Activated naive CD4-positive, alpha-beta T cell treated with anti-CD3 and anti-CD28 coated beads for 36 hours (primary cell): ENCODE measurements at regions of chr4 and their contacts with region 1.

Region 1: GRCh38 chr4:145808021-145808650 is 128.2 kb downstream of the C4orf51 start:
- DNase-seq: peak; percentile 74
- H3K4me3 Mint-ChIP-seq: peak overlapping the region; percentile 46
- H3K27ac Mint-ChIP-seq: peak overlapping the region; percentile 91
- H3K4me1 Mint-ChIP-seq: peaks cover 44% of the 10 kb centered on the region
- H3K27me3 Mint-ChIP-seq: no peaks in the 10 kb centered on the region

Region 2: DNA sequence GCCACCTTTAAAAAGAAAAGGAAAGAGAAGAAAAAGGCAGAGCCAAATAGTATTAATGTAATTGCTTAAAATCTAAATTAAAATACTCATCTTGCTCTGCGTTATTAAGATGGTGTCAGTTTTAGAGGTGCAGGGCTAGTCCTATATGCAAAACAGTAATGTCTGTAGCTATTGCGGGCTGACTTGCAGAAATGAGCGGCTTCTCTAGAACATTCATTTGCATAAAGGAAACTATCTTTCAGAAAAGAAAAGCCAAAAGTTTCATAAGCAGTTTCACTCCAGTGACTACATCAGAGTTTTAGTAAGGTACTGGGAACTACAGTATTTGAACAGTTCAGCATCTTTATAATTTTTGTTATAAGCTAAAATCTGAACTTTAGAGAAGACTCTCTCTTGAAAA is 320.5 kb before region 1 on chr4:
- CTCF ChIA-PET with region 1: no interaction called
- intact Hi-C with region 1: loop called (anchors 1 kb)
- DNase-seq: peak; percentile 55
- H3K4me3 Mint-ChIP-seq: no peak overlapping the region
- H3K27ac Mint-ChIP-seq: no peak overlapping the region
- H3K4me1 Mint-ChIP-seq: peaks cover 5% of the 10 kb centered on the region
- H3K27me3 Mint-ChIP-seq: peaks cover 14% of the 10 kb centered on the region

Region 3: GRCh38 chr4:145656156-145656555 is 152.0 kb before region 1 on chr4:
- CTCF ChIA-PET with region 1: no interaction called
- intact Hi-C with region 1: no loop called
- DNase-seq: no peak
- H3K4me3 Mint-ChIP-seq: no peak overlapping the region
- H3K27ac Mint-ChIP-seq: no peak overlapping the region
- H3K4me1 Mint-ChIP-seq: no peaks in the 10 kb centered on the region
- H3K27me3 Mint-ChIP-seq: no peaks in the 10 kb centered on the region

Region 4: DNA sequence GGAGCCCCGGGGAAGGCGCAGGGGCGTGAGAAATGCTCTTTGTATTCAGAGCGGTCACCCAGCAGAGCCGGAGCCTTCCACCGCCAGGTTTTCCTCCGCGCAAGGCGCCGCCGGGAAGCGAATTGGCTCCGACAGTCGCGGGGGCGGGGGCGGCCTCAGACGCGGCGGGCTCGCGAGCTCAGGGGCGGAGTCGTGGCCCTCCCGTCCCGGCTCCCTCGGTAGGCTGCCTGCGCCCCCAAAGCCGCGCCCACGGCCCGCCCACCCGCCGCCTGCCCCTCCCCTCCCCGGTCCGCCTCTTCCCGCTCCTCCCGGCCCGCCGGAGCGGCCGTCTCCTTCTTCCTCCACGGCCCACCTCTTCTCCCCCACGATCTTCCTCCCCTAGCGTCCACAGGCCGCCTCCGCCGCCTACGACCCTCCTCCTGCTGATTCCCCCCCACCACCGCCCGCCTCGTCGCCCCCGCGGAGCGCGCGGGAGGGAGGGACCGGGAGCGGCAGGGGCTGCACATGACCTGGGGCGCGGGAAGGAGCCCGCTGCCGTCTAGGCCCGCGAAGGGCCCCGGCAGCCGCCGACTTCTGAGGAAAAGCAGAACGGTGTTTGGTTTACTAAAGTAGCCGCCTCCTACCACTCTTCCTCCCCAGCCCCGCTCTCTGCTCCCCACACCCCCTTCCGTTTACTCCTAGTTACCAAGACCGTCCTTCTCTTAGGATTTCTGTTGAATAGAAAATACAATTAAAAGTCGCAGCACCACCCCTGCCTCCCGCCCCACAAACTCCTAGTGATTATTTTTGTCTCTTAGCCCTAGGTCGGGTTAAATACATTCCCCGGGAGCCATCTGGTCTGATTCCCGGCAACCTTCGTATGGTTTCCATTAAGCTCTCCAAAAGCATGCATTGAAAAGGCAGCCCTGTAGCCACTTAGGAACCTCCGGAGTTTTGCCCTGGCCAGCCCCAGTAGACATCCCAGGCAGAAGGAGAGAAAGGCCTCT is 74.9 kb before region 1 on chr4:
- CTCF ChIA-PET with region 1: no interaction called
- intact Hi-C with region 1: loop called (anchors 1 kb)
- DNase-seq: peak; percentile 91
- H3K4me3 Mint-ChIP-seq: peak overlapping the region; percentile 75
- H3K27ac Mint-ChIP-seq: peak overlapping the region; percentile 36
- H3K4me1 Mint-ChIP-seq: peaks cover 7% of the 10 kb centered on the region
- H3K27me3 Mint-ChIP-seq: peaks cover 10% of the 10 kb centered on the region

Region 5: DNA sequence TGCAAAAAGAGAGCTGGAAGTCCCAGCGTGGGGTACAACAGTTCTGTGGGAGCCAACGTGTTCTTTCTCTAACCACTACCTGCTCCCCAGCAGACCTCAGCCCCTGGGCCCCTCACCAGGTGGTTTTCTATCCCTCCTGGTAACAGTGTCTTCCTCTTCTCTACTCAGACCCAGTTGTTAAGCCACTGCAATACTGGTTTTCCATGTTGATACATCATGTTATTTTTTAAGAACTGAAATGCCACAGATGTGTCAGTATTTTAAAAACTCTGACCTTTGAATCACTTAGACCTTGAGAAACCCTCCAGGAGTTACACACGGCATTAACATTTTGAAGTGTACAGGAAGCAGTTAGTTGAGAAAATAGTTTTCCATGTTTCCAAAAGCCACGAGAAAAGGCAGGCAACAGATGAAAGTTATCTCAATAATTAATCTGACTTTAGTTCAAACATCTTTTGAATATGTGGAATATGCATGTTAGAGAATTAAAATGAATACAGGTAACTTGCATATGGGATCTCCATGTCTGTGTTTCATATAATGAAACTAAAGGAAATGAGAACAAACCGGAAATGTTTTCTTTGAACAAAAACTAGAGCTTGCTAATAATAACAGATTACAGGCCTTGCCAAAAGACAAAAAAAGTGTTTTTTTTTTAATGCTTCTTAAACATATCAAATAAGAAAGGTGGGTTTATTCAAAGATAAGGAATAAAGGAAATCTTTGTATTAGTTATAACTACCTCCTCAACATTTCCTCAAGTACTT is 21.7 kb after region 1 on chr4:
- CTCF ChIA-PET with region 1: interaction called, 5 read pairs
- intact Hi-C with region 1: loop called (anchors 1 kb)
- DNase-seq: peak; percentile 33
- H3K4me3 Mint-ChIP-seq: peak overlapping the region; percentile 23
- H3K27ac Mint-ChIP-seq: peak overlapping the region; percentile 13
- H3K4me1 Mint-ChIP-seq: peaks cover 41% of the 10 kb centered on the region
- H3K27me3 Mint-ChIP-seq: no peaks in the 10 kb centered on the region

Region 6: DNA sequence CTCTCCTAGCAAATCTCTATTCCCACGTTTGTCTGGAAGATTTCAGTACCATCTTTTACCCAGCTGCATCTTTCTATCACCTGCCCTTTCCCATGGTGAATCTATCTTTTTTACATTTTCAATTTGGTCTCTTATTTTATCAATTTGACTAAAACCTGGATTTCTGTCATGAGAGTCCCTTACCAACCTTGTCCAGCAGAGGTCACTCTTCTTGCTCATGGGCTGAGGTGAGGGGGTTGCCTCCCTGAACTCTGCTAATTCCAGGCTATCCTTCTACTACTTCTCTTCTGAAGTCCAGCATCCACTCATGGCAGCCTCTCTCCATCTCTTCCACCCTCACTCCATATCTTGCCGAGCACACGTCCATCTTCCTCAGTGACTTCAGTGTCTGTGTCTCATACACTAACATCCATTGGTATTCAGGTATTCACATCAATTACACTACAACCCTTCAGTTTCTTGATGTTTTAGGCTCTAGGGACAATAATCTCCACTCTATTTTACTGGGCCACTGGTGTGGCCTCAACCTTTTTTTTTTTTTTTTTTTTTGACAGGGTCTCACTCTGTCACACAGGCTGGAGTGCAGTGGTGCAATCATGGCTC is 148.3 kb after region 1 on chr4:
- CTCF ChIA-PET with region 1: no interaction called
- intact Hi-C with region 1: no loop called
- DNase-seq: peak; percentile 41
- H3K4me3 Mint-ChIP-seq: no peak overlapping the region
- H3K27ac Mint-ChIP-seq: no peak overlapping the region
- H3K4me1 Mint-ChIP-seq: no peaks in the 10 kb centered on the region
- H3K27me3 Mint-ChIP-seq: no peaks in the 10 kb centered on the region